ENCODE measurements at regions of chr2 and their contacts with region 1.

Region 1: DNA sequence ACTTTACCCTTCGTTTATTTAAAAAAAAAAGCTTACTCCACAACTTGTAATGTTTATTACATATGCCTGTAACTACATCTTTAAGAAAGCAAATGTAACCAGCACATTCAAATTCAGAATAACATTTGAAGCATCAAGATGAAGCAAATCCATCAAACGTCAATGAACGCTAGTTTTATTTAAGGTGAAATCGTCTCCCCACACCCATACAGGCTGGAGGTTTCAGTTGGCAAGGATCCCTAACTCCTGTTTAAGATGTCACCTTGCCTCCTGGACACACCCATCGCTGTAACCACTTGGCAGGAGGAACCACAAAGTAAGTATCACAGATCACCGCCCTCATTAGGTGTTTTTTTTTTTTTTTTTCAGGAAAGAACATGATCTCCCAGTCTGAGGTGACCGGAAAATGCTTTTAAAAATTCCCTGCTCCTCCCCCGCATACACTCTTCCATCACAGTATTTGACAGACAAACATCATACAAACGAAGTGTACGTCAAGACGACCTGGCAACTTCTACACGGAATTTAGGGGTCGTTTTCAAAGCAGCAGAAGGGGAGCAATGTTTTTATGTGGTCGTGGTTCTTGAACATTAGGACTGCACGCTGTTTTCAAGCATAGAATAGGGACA is 19.7 kb upstream of the STPG4 start:
- DNase-seq: peak; percentile 56
- H3K4me3 ChIP-seq: peak overlapping the region; percentile 68 to 91 (median 90)
- H3K27ac ChIP-seq: peak overlapping the region; percentile 100
- H3K4me1 ChIP-seq: peaks cover 41% of the 10 kb centered on the region
- H3K27me3 ChIP-seq: no peaks in the 10 kb centered on the region
- CTCF ChIP-seq: no peak
- POLR2A ChIP-seq: peak; percentile 22

Region 2: GRCh38 chr2:47145466-47145865 is 29.4 kb before region 1 on chr2:
- CTCF ChIA-PET with region 1: no interaction called
- POLR2A ChIA-PET with region 1: interaction called, 10 read pairs
- dilution Hi-C with region 1: no loop called
- intact Hi-C with region 1: no loop called
- DNase-seq: no peak
- H3K4me3 ChIP-seq: no peak overlapping the region
- H3K27ac ChIP-seq: no peak overlapping the region
- H3K4me1 ChIP-seq: no peaks in the 10 kb centered on the region
- H3K27me3 ChIP-seq: no peaks in the 10 kb centered on the region
- CTCF ChIP-seq: no peak
- POLR2A ChIP-seq: no peak

Region 3: GRCh38 chr2:47272031-47272864 is 97.4 kb after region 1 on chr2:
- CTCF ChIA-PET with region 1: interaction called, 24 read pairs
- POLR2A ChIA-PET with region 1: interaction called, 5 read pairs
- dilution Hi-C with region 1: no loop called
- intact Hi-C with region 1: no loop called
- DNase-seq: peak; percentile 46
- H3K4me3 ChIP-seq: peak overlapping the region in 2 of 3 experiments; percentile 11 to 33
- H3K27ac ChIP-seq: peak overlapping the region; percentile 34
- H3K4me1 ChIP-seq: peaks cover 23% of the 10 kb centered on the region
- H3K27me3 ChIP-seq: no peaks in the 10 kb centered on the region
- CTCF ChIP-seq: peak; percentile 96 to 99
- POLR2A ChIP-seq: no peak

Region 4: DNA sequence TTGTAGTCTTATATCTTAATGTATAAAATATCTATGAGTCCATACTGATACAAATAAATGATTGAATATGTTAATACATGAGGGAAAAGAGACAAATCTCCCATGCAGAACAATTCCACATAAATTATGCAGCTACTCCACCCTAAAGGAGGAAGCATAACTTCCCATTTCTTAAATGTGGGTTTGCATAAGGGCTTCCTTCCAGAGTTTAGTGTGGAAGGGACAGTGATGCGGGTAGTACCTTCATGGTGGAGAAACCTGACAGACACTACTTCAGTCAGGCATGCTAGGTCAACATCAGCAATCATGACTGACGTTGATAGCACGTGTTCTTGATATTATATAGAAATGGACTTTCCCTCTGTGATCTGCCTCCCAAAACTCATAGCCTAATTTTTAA is 1208.2 kb after region 1 on chr2:
- CTCF ChIA-PET with region 1: no interaction called
- POLR2A ChIA-PET with region 1: no interaction called
- dilution Hi-C with region 1: no loop called
- intact Hi-C with region 1: no loop called
- DNase-seq: no peak
- H3K4me3 ChIP-seq: no peak overlapping the region
- H3K27ac ChIP-seq: no peak overlapping the region
- H3K4me1 ChIP-seq: peaks cover 10% of the 10 kb centered on the region
- H3K27me3 ChIP-seq: no peaks in the 10 kb centered on the region
- CTCF ChIP-seq: no peak
- POLR2A ChIP-seq: no peak